CD8-positive, alpha-beta T cell (primary cell): ENCODE measurements at regions of chr2 and their contacts with region 1.

Region 1: DNA sequence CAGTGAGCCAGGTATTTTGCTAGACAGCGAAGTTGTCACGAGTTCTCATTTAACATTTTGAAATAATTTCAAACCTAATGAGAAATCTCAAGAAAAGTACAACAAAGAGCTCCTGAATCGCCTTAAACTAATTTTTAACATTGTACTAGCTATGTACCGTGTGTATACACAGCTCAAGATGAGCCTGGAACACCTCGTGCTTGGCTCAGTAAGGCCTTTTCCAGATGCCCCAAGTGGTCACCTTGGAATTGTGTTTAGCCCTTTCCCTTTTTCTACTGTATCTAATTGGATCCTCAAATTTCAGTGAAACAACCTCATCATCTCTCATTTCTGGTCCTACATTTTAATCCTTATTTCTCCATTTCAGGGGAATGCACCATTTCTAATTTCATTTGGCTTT is 7.2 kb downstream of the PTPN4 start:
- DNase-seq: no peak
- ATAC-seq: no peak
- H3K4me3 ChIP-seq: no peak overlapping the region
- H3K4me3 Mint-ChIP-seq: no peak overlapping the region
- H3K27ac ChIP-seq: no peak overlapping the region
- H3K27ac Mint-ChIP-seq: no peak overlapping the region
- H3K4me1 ChIP-seq: peaks cover 54% of the 10 kb centered on the region
- H3K4me1 Mint-ChIP-seq: peaks cover 54% of the 10 kb centered on the region
- H3K27me3 ChIP-seq: no peaks in the 10 kb centered on the region
- H3K27me3 Mint-ChIP-seq: no peaks in the 10 kb centered on the region
- CTCF ChIP-seq: no peak

Region 2: DNA sequence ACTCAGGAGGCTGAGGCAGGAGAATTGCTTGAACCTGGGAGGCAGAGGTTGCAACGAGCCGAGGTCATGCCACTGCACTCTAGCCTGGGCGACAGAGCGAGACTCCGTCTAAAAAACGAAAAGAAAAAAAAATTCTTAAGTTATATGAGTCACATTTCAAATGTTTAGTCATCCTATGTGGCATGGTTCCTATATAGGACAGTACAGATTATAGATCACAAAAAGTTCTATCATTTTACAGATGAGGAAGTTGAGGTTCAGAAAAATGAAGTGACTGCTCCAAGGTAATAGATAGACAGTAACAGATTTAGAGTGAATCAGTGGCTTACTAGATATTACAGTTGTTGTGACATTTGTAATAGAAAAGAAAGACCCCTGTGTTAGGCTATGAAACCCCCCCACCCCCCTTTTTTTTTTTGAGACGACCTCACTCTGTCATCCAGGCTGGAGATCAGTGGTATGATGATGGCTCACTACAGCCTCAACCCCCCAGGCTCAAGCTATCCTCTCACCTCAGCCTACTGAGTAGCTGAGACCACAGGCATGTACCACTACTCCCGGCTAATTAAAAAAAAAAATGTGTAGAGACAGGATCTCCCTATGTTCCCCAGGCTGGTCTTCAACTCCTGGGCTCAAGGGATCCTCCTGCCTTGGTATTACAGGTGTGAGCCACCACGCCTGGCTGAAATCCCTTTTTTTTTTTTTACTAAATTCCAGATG is 15.5 kb after region 1 on chr2:
- CTCF ChIA-PET with region 1: no interaction called
- POLR2A ChIA-PET with region 1: no interaction called
- intact Hi-C with region 1: loop called (anchors 2 kb)
- DNase-seq: no peak
- ATAC-seq: no peak
- H3K4me3 ChIP-seq: no peak overlapping the region
- H3K4me3 Mint-ChIP-seq: no peak overlapping the region
- H3K27ac ChIP-seq: no peak overlapping the region
- H3K27ac Mint-ChIP-seq: peak overlapping the region; percentile 7
- H3K4me1 ChIP-seq: peaks cover 15% of the 10 kb centered on the region
- H3K4me1 Mint-ChIP-seq: peaks cover 64% of the 10 kb centered on the region
- H3K27me3 ChIP-seq: no peaks in the 10 kb centered on the region
- H3K27me3 Mint-ChIP-seq: no peaks in the 10 kb centered on the region
- CTCF ChIP-seq: no peak

Region 3: DNA sequence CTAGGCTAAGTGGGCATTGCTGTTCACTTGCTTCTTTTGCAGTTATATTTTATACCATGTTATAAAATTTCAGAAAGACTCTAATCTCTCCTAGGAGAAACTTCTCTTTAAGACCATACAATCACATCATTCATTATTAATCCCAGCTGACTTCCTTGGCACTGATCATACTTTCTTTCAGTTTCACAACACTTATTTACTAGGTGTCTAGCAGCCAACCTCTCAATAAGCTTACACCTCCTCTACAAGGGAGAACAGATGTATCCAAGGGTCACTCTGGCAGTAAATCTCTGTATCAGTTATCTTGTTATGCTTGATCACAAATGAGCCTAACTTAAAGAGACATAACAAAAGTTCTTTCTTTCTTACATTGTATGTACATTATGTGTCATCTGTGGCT is 176.1 kb after region 1 on chr2:
- CTCF ChIA-PET with region 1: no interaction called
- POLR2A ChIA-PET with region 1: no interaction called
- intact Hi-C with region 1: no loop called
- DNase-seq: no peak
- ATAC-seq: no peak
- H3K4me3 ChIP-seq: no peak overlapping the region
- H3K4me3 Mint-ChIP-seq: no peak overlapping the region
- H3K27ac ChIP-seq: peak overlapping the region in 1 of 2 experiments; percentile 38
- H3K27ac Mint-ChIP-seq: peak overlapping the region; percentile 46
- H3K4me1 ChIP-seq: peaks cover 25% of the 10 kb centered on the region
- H3K4me1 Mint-ChIP-seq: peaks cover 63% of the 10 kb centered on the region
- H3K27me3 ChIP-seq: no peaks in the 10 kb centered on the region
- H3K27me3 Mint-ChIP-seq: no peaks in the 10 kb centered on the region
- CTCF ChIP-seq: no peak